ENCODE measurements at regions of chr19 and their contacts with region 1.

Region 1: GRCh38 chr19:7562646-7563393 is 27.3 kb downstream of the PNPLA6 start:
- DNase-seq: peak; percentile 31
- ATAC-seq: no peak
- H3K4me3 Mint-ChIP-seq: no peak overlapping the region
- H3K27ac Mint-ChIP-seq: no peak overlapping the region
- H3K4me1 Mint-ChIP-seq: no peaks in the 10 kb centered on the region
- H3K27me3 Mint-ChIP-seq: no peaks in the 10 kb centered on the region

Region 2: DNA sequence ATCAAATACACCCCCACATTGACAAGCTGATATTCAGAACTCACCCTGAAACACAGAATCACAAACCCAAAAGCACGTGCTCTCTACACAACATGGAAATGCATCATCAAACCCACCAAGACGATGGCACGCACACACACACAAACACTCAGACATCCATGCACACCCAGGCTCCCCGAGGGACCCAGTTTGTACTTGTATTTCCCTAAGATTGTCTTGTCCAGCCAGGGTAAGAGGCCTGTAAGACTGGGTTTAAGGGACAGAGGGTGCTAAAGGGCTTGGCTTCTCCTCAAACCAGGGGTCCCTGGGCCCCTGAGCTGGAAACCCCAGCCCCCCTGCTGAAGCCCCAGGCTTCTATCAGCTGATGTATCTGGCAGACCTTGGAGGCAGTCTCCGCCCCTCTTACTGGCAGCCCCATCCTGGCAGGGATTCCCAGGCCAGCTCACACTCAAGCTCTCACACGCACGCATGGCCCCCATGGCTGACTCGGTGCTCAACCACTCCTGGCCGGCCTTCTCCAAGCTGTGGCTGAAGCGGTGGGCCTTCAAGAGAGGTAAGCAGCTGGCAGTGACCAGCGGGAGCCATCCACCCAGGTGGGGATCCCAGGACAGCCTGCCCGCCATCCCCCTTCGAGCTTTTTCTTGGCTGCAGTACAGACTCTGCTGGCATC is 207.5 kb before region 1 on chr19:
- CTCF ChIA-PET with region 1: interaction called, 7 read pairs
- POLR2A ChIA-PET with region 1: no interaction called
- intact Hi-C with region 1: loop called in 1 of 2 experiments (anchors 2 kb)
- DNase-seq: peak; percentile 7
- ATAC-seq: no peak
- H3K4me3 Mint-ChIP-seq: no peak overlapping the region
- H3K27ac Mint-ChIP-seq: peak overlapping the region; percentile 90
- H3K4me1 Mint-ChIP-seq: peaks cover 63% of the 10 kb centered on the region
- H3K27me3 Mint-ChIP-seq: no peaks in the 10 kb centered on the region

Region 3: DNA sequence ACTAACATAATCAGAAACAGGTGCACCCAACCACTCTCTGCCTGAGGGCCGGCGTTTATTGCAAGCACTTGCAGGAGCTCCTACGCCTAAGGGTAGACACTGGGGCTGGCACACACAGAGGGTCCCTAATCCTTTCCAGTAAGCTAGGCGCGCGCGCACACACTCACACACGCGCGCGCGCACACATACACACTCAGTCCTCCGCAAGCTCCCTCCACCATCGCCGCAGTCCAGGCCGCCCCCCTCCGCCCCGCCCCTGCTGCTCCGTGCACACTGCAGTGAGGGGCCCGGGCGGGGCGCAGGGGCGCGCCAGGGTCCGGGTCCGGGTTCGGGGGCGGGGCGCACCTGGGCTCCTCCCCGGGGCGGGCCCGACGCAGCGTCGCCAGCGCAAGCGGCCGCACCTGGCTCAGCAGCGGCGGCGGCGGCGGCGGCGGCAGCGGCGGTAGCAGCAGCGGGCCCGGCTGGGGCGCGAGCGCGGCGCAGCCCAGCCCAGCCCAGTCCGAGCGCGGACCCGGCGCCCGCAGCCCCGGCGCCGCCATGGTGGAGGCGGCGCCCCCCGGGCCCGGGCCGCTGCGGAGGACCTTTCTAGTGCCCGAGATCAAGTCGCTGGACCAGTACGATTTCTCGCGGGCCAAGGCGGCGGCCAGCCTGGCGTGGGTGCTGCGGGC is 32.8 kb after region 1 on chr19 and contains the start of gene CAMSAP3:
- CTCF ChIA-PET with region 1: interaction called, 5 read pairs
- POLR2A ChIA-PET with region 1: no interaction called
- intact Hi-C with region 1: loop called in 1 of 2 experiments (anchors 1 kb)
- DNase-seq: peak; percentile 68
- ATAC-seq: peak; percentile 93
- H3K4me3 Mint-ChIP-seq: peak within 1 kb of the TSS; percentile 52
- H3K27ac Mint-ChIP-seq: no peak within 1 kb of the TSS
- H3K4me1 Mint-ChIP-seq: peaks cover 3% of the 10 kb centered on the region
- H3K27me3 Mint-ChIP-seq: peaks cover 34% of the 10 kb centered on the region
- total RNA-seq, gene CAMSAP3: 0.50 to 0.58 TPM

Region 4: GRCh38 chr19:7629347-7630054 is 66.7 kb after region 1 on chr19 and contains the starts of genes PET100 and XAB2:
- CTCF ChIA-PET with region 1: interaction called, 14 read pairs
- POLR2A ChIA-PET with region 1: interaction called, 3 read pairs
- intact Hi-C with region 1: no loop called
- DNase-seq: peak; percentile 97
- ATAC-seq: peak; percentile 99
- H3K4me3 Mint-ChIP-seq: peak within 1 kb of the TSS; percentile 88
- H3K27ac Mint-ChIP-seq: peak within 1 kb of the TSS; percentile 97
- H3K4me1 Mint-ChIP-seq: peaks cover 32% of the 10 kb centered on the region
- H3K27me3 Mint-ChIP-seq: no peaks in the 10 kb centered on the region
- total RNA-seq, gene PET100: 45.1 to 99.4 TPM
- total RNA-seq, gene XAB2: 45.9 to 48.3 TPM

Region 5: DNA sequence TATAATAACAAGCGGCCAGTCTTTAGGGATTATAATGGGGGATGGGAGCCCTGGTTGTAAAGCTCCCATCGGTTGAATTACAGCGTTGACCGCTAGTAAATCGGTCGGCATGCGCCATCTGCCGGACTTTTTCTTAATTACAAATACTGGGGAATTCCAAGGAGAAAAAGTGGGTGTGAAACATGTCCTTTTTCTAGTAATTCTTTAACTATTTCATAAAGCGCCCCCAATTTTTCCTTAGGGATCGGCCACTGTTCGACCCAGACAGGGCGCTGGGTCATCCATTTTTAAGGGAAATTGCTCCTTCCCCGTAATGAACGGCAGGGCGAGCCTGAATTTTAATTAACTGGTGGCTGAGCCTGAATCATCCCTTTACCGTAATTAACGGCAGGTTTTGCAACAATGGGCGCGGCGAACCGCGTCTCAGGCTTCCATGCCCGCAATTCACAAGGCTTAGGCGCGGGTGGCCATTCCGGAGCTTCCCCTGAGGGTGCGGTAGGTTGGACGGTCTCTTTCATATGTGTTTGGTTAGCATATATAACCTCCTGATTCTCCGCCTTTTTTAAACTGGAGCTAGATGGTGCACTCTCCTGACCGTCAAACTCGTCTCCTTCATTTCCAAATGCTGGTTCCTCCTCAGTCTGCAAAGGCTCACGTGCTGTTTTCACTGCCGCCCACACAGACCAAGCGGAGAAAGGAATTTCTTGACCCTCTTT is 237.0 kb after region 1 on chr19:
- CTCF ChIA-PET with region 1: interaction called, 19 read pairs
- POLR2A ChIA-PET with region 1: no interaction called
- intact Hi-C with region 1: loop called (anchors 1 kb)
- DNase-seq: peak; percentile 73
- ATAC-seq: peak; percentile 63
- H3K4me3 Mint-ChIP-seq: peak overlapping the region; percentile 21
- H3K27ac Mint-ChIP-seq: no peak overlapping the region
- H3K4me1 Mint-ChIP-seq: peaks cover 8% of the 10 kb centered on the region
- H3K27me3 Mint-ChIP-seq: peaks cover 32% of the 10 kb centered on the region